ENCODE measurements at regions of chr15 and their contacts with region 1.

Region 1: DNA sequence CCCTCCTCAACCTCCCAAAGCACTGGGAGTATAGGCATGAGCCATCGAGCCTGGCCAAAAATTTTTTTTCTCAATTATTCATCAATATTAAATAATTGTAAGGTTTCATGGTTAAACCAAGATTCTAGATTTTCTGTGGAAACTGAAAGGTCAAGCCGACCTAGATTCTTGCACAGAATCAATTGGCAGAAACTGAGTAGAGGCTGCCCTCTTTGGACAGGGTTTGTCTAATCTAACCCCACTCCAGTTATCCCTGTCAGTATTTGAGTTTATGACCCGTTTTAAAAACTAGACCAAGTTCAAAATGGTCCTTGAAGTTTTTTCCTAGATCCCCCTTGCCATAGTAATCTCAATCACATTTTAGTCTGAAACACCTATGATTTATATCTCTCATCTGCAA is 8.6 kb upstream of the ADAM10 start:
- DNase-seq: no peak
- H3K4me3 Mint-ChIP-seq: no peak overlapping the region
- H3K27ac Mint-ChIP-seq: no peak overlapping the region
- H3K4me1 Mint-ChIP-seq: no peaks in the 10 kb centered on the region
- H3K27me3 Mint-ChIP-seq: peaks cover 3% of the 10 kb centered on the region

Region 2: DNA sequence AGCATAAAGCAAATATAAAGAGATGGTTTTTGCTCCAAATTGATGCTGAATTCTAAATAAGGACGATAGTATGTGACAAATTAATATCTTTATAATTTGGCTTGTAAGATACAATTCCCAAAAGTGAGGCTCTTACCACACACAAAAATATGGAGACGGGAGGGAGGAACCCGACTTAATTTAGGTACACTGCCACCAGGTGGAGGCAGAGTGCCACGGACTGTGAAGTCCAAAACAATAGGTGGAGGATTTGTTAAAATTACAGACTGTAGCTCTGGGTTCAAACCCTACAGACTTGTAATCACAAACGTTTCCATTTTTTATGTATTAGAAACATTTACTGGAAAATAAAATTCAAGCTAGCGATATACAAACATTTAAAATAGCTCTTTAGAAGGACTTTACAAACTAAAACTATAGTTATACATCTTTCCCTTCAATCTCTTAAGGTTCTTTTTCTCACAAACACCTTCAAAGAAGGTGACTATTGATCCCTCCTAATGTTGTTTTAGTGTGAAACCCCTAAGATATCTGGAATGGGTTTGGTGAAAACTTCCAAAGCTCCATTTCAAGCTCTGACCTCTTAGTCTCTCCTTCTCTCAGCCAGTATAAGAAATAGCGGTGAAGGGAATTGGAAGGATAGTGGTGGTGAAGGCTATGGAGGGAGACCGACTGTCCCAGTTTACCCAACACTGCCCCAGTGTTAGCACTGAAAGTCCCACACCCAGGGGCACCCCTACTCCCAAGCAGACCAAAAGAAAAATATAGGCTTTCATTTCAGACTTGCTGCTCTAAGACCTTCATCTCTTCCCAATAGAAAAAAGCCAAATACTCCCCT is 530.2 kb before region 1 on chr15:
- CTCF ChIA-PET with region 1: interaction called, 6 read pairs
- POLR2A ChIA-PET with region 1: no interaction called
- intact Hi-C with region 1: loop called (anchors 1 kb)
- DNase-seq: peak; percentile 77
- H3K4me3 Mint-ChIP-seq: no peak overlapping the region
- H3K27ac Mint-ChIP-seq: no peak overlapping the region
- H3K4me1 Mint-ChIP-seq: peaks cover 11% of the 10 kb centered on the region
- H3K27me3 Mint-ChIP-seq: peaks cover 17% of the 10 kb centered on the region

Region 3: GRCh38 chr15:58269455-58270414 is 488.4 kb before region 1 on chr15:
- CTCF ChIA-PET with region 1: interaction called, 3 read pairs
- POLR2A ChIA-PET with region 1: no interaction called
- intact Hi-C with region 1: loop called (anchors 5 kb)
- DNase-seq: peak; percentile 24
- H3K4me3 Mint-ChIP-seq: no peak overlapping the region
- H3K27ac Mint-ChIP-seq: no peak overlapping the region
- H3K4me1 Mint-ChIP-seq: peaks cover 6% of the 10 kb centered on the region
- H3K27me3 Mint-ChIP-seq: no peaks in the 10 kb centered on the region